PC-3 (cell line): ENCODE measurements at regions of chr2 and their contacts with region 1.

Region 1: GRCh38 chr2:1631804-1632348 is 112.4 kb downstream of the PXDN start:
- DNase-seq: peak; percentile 97
- ATAC-seq: peak; percentile 83
- H3K4me3 ChIP-seq: peak overlapping the region; percentile 28; the same call in 1 of the 2 replicates
- H3K27ac ChIP-seq: peak overlapping the region; percentile 98
- H3K4me1 ChIP-seq: peaks cover 76% of the 10 kb centered on the region
- H3K27me3 ChIP-seq: no peaks in the 10 kb centered on the region
- CTCF ChIP-seq: no peak

Region 2: DNA sequence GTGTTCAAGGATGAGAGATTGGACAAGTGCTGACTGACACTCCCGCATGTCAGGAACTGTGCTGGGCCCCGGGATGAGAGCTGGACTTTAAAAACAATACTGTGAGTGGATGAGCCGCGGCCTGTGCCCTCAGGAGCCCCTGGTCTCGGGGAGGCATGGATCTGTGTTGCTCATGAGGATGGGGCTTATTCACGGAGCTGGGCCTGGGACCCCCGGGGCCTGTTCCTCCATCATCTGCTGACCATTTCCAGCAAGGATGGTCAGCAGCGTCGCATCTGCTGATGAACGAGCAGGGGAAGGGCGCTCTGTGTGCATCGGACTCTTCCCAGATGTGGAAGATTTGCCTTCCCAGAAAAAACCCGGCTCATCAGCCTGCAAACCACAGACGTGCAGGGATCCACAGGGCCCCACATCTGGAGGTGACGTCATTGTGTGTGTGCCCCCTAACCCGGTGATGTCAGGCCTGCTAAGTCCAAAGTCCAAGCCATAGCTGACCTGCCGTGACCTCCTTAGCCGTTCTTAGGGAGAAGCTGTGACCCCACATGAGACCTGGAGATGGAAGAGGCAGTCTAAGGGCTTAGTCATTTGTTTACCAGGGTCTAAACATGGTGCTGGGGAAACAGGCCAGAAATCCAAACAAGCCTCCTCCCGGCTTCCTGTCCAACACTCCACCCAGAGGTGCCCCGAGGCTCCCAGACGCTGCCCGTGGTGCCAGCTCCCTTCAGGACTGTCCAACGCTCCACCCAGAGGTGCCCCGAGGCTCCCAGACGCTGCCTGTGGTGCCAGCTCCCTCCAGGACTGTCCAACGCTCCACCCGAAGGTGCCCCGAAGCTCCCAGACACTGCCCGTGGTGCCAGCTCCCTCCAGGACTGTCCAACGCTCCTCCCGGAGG is 31.4 kb before region 1 on chr2:
- CTCF ChIA-PET with region 1: no interaction called
- POLR2A ChIA-PET with region 1: no interaction called
- intact Hi-C with region 1: loop called (anchors 2 kb)
- DNase-seq: peak; percentile 85
- ATAC-seq: peak; percentile 86
- H3K4me3 ChIP-seq: peak overlapping the region; percentile 36
- H3K27ac ChIP-seq: peak overlapping the region; percentile 83
- H3K4me1 ChIP-seq: peaks cover 21% of the 10 kb centered on the region
- H3K27me3 ChIP-seq: no peaks in the 10 kb centered on the region
- CTCF ChIP-seq: no peak

Region 3: GRCh38 chr2:2161871-2162653 is 530.2 kb after region 1 on chr2:
- CTCF ChIA-PET with region 1: no interaction called
- POLR2A ChIA-PET with region 1: no interaction called
- intact Hi-C with region 1: no loop called
- DNase-seq: no peak
- ATAC-seq: no peak
- H3K4me3 ChIP-seq: no peak overlapping the region
- H3K27ac ChIP-seq: no peak overlapping the region
- H3K4me1 ChIP-seq: no peaks in the 10 kb centered on the region
- H3K27me3 ChIP-seq: peaks cover 44% of the 10 kb centered on the region; the same call in 1 of the 2 replicates
- CTCF ChIP-seq: no peak